PC-9 (cell line): ENCODE measurements at regions of chr9 and their contacts with region 1.

Region 1: DNA sequence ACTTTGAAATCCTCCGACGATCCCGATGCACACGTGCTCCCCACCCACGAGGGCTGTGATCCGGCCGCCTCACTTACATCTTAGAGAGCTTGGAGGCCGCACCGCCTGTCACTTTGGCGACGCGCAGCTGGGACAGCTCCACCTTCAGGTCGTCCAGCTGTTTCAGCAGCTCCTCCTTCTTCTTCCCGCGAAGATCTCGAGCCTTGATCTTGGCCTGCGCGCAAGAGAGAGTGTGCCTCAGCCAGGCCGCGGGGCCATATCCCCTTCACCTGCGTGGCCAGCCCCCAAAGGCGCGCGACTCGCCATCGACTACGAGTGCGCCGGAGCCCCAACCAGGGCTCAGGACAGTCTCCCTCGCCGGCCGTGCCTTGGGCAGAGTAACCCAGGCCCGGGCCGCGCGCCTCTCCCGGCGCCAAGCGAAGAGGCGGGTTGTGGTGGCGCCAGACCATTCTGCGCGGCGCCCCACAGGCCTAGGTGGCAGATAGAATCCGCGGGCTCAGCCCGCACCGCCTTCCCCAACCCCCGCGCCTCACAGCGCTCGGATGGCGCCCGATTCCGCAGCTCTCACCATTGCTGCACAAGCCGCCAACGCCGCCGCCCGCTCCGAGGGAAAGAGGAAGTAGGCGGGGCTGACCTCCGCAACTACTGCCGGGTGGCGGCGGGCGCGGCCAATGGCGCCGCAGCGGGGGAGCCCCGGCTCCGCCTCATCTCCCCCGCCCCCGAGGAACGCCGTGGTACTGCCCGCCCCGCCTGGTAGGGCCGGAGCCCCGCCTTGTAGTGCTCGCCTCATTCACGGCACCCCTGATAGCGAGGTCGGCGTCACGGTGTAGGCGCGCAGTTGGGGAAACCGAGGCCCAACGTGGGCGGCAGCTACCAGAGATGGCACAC is at the starts of genes ARPC5L and RPL35:
- DNase-seq: peak; percentile 79 to 96
- H3K4me3 ChIP-seq: peak within 1 kb of the TSS; percentile 97
- H3K27ac ChIP-seq: peak within 1 kb of the TSS; percentile 93
- H3K4me1 ChIP-seq: peaks cover 44% of the 10 kb centered on the region
- H3K27me3 ChIP-seq: no peaks in the 10 kb centered on the region
- CTCF ChIP-seq: no peak; the same call in 1 of the 2 replicates
- total RNA-seq, gene ARPC5L: 71.0 and 84.4 TPM in 2 replicates
- total RNA-seq, gene RPL35: 2,125 and 2,313 TPM in 2 replicates

Region 2: DNA sequence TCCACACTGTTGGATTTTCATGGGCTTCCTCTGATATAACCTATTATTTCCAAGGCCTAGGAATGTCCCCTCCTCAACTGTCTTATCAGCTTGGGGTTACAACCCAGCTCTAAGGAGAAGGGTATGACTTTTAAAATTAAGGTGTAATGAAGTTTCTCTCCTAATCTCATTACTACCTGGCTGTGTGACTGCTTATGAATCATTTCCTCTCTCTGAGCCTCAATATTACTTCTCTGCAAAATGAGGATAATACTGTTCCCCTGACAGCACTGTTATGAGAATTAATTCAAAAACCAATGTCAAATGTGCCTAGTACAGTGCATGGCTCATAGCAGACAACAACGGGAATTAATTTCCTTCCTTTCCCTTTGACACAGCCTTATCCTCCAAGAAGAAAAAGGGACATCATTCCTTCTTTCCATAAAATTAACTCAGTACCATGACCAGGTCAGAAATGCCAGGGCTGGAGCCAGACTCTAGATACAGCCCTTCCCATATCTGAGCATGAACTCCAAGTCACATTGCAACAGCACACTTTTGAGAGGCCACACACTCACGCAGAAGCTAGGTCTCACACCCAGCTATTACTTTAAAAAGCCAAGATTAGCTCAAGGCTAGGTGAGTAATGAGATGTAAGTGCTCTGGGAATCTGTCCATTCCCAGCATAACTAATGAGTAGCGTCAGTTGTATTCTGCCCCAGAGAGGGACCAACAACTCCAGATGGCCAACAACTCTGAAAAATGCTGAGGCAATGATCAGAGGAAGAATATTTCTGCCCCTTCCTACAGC is 209.2 kb before region 1 on chr9:
- CTCF ChIA-PET with region 1: no interaction called
- POLR2A ChIA-PET with region 1: interaction called, 13 read pairs
- intact Hi-C with region 1: loop called (anchors 5 kb)
- DNase-seq: peak; percentile 63 to 97
- H3K4me3 ChIP-seq: no peak overlapping the region; the same call in 1 of the 2 replicates
- H3K27ac ChIP-seq: peak overlapping the region; percentile 93
- H3K4me1 ChIP-seq: peaks cover 33% of the 10 kb centered on the region
- H3K27me3 ChIP-seq: no peaks in the 10 kb centered on the region
- CTCF ChIP-seq: no peak

Region 3: DNA sequence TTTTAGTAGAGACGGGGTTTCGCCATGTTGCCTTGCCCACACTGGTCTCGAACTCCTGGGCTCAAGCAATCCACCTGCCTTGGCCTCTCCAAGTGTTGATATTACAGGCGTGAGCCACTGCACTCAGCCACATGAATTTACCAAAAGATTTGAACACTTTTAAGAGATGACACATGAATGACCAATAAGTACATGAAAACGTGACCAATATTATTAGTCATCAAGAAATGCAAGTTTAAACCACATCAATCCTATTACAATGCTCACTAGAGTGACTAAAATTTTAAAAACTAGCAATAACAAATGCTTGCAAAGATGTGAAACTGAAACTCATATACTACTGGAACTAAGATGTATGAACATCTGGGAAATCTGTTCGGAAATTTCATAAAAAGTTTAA is 144.8 kb before region 1 on chr9:
- CTCF ChIA-PET with region 1: no interaction called
- POLR2A ChIA-PET with region 1: no interaction called
- intact Hi-C with region 1: no loop called
- DNase-seq: no peak
- H3K4me3 ChIP-seq: no peak overlapping the region
- H3K27ac ChIP-seq: no peak overlapping the region
- H3K4me1 ChIP-seq: peaks cover 6% of the 10 kb centered on the region; the same call in 1 of the 2 replicates
- H3K27me3 ChIP-seq: no peaks in the 10 kb centered on the region
- CTCF ChIP-seq: no peak

Region 4: DNA sequence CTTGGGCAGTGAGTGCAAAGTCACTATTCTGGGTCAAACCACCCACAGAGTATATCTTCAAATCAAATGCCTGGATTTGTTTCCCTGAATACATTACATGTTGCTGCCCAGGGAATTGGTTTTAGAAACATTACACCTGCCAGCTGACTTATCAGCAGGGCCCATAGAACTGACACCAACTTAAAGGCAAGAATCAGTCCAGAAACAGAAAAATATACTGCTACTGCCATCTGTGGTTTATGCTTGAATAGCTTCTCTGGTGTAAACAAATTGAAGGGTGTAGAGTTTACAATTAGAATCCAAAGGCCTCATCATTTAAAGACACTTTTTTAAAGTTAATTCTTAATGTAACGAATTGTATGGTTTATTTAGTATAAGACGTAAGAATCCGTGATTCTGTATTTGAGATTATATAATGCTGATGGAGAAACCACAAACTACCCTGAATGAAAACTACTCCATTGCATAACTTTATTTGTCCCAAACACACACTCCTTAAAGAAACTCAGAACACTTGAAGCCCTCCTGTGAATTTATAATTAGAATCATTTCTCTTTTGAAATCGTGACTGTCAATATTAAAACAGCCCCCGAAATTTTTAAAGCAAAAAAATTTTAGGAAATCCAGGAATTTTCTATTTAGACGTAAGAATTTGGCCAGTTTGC is 96.7 kb before region 1 on chr9:
- CTCF ChIA-PET with region 1: interaction called, 159 read pairs
- POLR2A ChIA-PET with region 1: interaction called, 16 read pairs
- intact Hi-C with region 1: no loop called
- DNase-seq: no peak
- H3K4me3 ChIP-seq: no peak overlapping the region
- H3K27ac ChIP-seq: no peak overlapping the region
- H3K4me1 ChIP-seq: peaks cover 25% of the 10 kb centered on the region
- H3K27me3 ChIP-seq: no peaks in the 10 kb centered on the region
- CTCF ChIP-seq: peak; percentile 53; the same call in 1 of the 2 replicates

Region 5: GRCh38 chr9:124929464-124929863 is 67.9 kb after region 1 on chr9:
- CTCF ChIA-PET with region 1: interaction called, 10 read pairs
- POLR2A ChIA-PET with region 1: interaction called, 5 read pairs
- intact Hi-C with region 1: no loop called
- DNase-seq: no peak
- H3K4me3 ChIP-seq: no peak overlapping the region
- H3K27ac ChIP-seq: no peak overlapping the region
- H3K4me1 ChIP-seq: no peaks in the 10 kb centered on the region
- H3K27me3 ChIP-seq: no peaks in the 10 kb centered on the region
- CTCF ChIP-seq: no peak

Region 6: GRCh38 chr9:125049212-125050049 is 187.8 kb after region 1 on chr9:
- CTCF ChIA-PET with region 1: no interaction called
- POLR2A ChIA-PET with region 1: no interaction called
- intact Hi-C with region 1: no loop called
- DNase-seq: no peak
- H3K4me3 ChIP-seq: no peak overlapping the region
- H3K27ac ChIP-seq: no peak overlapping the region
- H3K4me1 ChIP-seq: no peaks in the 10 kb centered on the region
- H3K27me3 ChIP-seq: no peaks in the 10 kb centered on the region
- CTCF ChIP-seq: no peak

Region 7: GRCh38 chr9:125126019-125126746 is 264.6 kb after region 1 on chr9:
- CTCF ChIA-PET with region 1: interaction called, 4 read pairs
- POLR2A ChIA-PET with region 1: interaction called, 15 read pairs
- intact Hi-C with region 1: no loop called
- DNase-seq: peak; percentile 15 to 39
- H3K4me3 ChIP-seq: no peak overlapping the region
- H3K27ac ChIP-seq: no peak overlapping the region
- H3K4me1 ChIP-seq: no peaks in the 10 kb centered on the region
- H3K27me3 ChIP-seq: no peaks in the 10 kb centered on the region
- CTCF ChIP-seq: no peak

Region 8: GRCh38 chr9:125261501-125262293 is 400.1 kb after region 1 on chr9 and contains the start of gene GAPVD1:
- CTCF ChIA-PET with region 1: no interaction called
- POLR2A ChIA-PET with region 1: interaction called, 26 read pairs
- intact Hi-C with region 1: no loop called
- DNase-seq: peak; percentile 88 to 95
- H3K4me3 ChIP-seq: peak within 1 kb of the TSS; percentile 78
- H3K27ac ChIP-seq: peak within 1 kb of the TSS; percentile 83
- H3K4me1 ChIP-seq: peaks cover 24% of the 10 kb centered on the region
- H3K27me3 ChIP-seq: no peaks in the 10 kb centered on the region
- CTCF ChIP-seq: no peak; the same call in 1 of the 2 replicates
- total RNA-seq, gene GAPVD1: 58.2 and 70.3 TPM in 2 replicates